Left ventricle myocardium superior (tissue), 1 donor: ENCODE measurements at regions of chr2 and their contacts with region 1.

Region 1: DNA sequence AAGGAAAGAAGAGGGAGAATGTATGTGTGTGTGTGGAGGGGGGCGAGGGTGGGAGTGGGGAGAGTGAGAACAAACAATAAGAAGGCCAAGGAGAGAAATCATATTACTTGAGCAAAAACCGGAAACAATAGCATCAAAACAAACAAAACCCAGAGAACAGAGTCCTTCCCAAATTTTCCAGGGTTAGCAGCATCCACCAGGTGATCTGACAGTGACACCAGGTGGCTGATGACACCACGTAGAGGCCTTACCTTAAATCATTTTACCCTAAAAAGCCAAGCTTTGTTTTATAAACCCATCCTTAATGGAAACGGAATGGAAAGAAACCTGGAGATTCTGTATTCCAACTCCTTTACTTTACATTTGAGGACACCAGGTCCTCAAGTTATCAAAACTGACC is 42.9 kb downstream of the CDCA7 start:
- DNase-seq: no peak
- ATAC-seq: no peak

Region 2: DNA sequence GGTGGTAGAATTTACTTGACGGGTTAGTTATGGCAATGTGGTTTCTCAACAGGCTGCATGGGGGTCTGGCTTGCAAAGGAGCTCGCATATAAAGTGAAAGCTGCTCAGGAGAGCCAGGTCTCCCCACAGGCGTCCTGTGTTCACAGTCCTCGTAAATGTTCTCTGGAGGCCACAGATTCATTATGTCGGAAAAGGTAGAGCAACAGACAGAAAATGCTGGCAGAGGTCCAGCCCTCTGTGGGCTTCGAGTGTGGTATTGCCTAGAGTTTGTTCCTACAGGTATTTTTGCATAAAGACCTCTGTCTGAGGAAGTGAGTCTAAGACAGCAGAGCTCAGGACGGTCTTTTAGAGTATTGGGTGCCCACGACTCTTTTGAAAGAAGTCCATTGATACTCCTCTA is 53.6 kb after region 1 on chr2:
- intact Hi-C with region 1: loop called (anchors 5 kb)
- DNase-seq: no peak
- ATAC-seq: no peak